Pancreas (tissue), 10 donors: ENCODE measurements at regions of chr4 and their contacts with region 1.

Region 1: GRCh38 chr4:38387348-38387747 is 276.7 kb upstream of the KLF3 start:
- DNase-seq: peak in 4 of 6 donors; percentile 36 to 80 (median 51)
- ATAC-seq: peak; percentile 47 to 64 (median 56)
- H3K4me3 ChIP-seq: no peak overlapping the region
- H3K27ac ChIP-seq: peak overlapping the region in 3 of 4 donors; percentile 22 to 73 (median 59)
- H3K4me1 ChIP-seq: peaks cover 18 to 33% (median 32%) of the 10 kb centered on the region in 3 donors
- H3K27me3 ChIP-seq: no peaks in the 10 kb centered on the region
- CTCF ChIP-seq: no peak

Region 2: DNA sequence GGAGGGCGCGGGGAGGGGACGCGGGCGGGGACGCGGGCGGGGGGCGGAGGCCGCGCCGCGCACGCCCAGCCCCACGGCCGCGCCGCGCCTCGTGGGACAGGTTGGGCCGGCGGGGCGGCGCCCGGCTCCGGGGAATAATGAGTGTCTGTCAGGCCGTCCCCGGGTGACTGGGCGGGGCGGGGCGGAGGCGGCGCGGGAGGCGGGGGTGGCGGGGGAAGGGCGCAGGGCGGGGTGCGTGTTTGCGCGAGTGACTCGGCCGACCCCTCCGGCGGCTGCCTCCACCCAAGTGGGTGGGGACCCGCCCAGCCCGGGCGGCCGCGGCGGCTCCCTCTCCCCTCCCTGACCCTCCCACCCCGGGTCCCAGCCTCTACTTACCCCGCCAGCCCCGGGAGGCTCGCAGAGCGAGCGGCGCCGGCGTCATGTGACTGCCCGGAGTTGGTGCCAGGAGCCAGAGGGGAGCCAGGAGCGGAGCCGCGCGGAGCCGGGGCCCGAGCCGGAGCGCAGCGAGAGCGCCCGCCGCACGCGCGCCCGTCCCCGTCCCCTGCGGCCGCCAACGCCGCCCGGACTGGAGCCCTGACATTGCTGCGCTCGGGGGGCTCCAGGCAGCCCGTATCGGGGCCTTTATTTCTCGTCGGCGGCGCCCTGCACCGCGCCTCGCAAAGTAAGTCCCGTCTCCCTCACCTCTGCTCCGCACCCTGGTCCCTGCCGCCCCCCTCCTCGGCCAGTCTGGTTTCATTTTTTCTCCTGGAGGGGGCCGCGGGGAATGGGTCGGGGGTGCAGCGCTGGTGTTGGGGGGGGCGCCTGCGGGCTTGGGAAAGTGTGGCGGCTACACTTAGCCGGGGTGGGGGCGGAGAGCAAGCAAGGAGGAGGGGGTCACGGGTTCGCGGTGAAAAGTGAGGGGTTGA is 276.7 kb after region 1 on chr4 and contains the start of gene KLF3:
- intact Hi-C with region 1: loop called in 1 of 3 experiments (anchors 10 kb)
- DNase-seq: peak; percentile 94 to 97 (median 96)
- ATAC-seq: peak; percentile 67 to 79 (median 74)
- H3K4me3 ChIP-seq: peak within 1 kb of the TSS; percentile 74 to 98 (median 87)
- H3K27ac ChIP-seq: peak within 1 kb of the TSS; percentile 97 to 99 (median 99)
- H3K4me1 ChIP-seq: peaks cover 9 to 24% (median 22%) of the 10 kb centered on the region in 3 donors
- H3K27me3 ChIP-seq: no peaks in the 10 kb centered on the region
- CTCF ChIP-seq: no peak
- total RNA-seq, gene KLF3: 19.8 to 33.4 (median 28.6) TPM

Region 3: DNA sequence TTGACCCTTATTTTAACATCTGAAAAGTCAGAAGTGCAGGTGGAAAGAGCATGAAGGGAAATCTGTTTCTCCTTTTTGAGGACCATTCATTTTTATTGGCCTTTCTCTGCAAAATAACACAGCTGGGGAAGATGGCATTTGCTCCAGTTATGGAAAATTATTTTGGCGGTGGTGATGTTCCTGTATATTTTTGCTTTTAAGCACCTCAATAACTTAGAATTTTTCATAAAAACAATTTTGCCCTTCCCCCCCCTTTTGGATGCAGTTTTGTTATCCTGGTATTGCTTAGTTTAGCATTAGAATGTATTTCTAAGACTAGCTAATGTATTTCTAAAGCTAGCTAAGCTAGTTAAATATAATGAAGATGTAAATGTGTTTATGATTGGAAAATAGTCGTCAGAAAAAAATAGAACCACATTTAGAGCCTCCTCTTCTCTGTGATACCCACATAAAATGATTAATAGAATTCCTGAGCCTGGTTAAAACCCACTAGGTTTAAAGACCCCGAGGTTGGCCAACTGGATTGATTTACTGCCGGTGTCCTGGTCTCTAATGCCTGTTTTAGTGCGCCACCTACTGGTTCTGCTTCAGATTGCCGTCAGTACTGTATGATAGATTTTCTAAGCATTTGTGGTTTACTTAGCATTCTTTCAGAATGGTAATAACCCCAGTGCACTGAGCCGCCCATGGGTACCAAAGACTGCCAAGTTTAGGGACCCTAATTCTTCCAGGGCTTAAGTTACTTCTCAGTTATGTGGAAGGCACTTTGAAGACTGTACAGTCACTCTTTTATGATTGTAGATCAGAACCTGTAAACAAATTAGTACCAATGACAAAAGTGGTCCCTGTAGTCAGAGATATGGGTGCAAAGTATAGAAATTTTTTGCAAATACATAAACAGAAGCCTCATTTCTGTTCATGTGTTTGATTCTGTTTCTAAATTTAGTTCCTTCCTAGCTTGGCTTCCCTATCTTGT is 288.1 kb after region 1 on chr4:
- intact Hi-C with region 1: loop called in 1 of 3 experiments (anchors 10 kb)
- DNase-seq: peak in 5 of 6 donors; percentile 62 to 81 (median 72)
- ATAC-seq: peak; percentile 58 to 76 (median 66)
- H3K4me3 ChIP-seq: peak overlapping the region in 1 of 4 donors; percentile 8
- H3K27ac ChIP-seq: peak overlapping the region in 3 of 4 donors; percentile 63 to 99 (median 74)
- H3K4me1 ChIP-seq: peaks cover 43 to 67% (median 50%) of the 10 kb centered on the region in 3 donors
- H3K27me3 ChIP-seq: no peaks in the 10 kb centered on the region
- CTCF ChIP-seq: peak; percentile 65 to 84 (median 78)